ENCODE measurements at regions of chr20 and their contacts with region 1.

Region 1: GRCh38 chr20:33262658-33263065 is 20.4 kb upstream of the BPIFB1 start:
- DNase-seq: peak; percentile 82
- ATAC-seq: peak; percentile 99
- H3K4me3 ChIP-seq: no peak overlapping the region
- H3K27ac ChIP-seq: no peak overlapping the region
- H3K4me1 ChIP-seq: no peaks in the 10 kb centered on the region
- H3K27me3 ChIP-seq: peaks cover 0 to 15% of the 10 kb centered on the region in 2 experiments; a peak in 3 of 5 replicates
- CTCF ChIP-seq: peak; percentile 98
- EP300 ChIP-seq: no peak
- POLR2A ChIP-seq: no peak
- RAD21 ChIP-seq: peak; percentile 96

Region 2: GRCh38 chr20:33291830-33292355 is 29.2 kb after region 1 on chr20:
- CTCF ChIA-PET with region 1: interaction called, 42 read pairs
- POLR2A ChIA-PET with region 1: no interaction called
- in situ Hi-C with region 1: no loop called
- intact Hi-C with region 1: loop called (anchors 1 kb)
- DNase-seq: peak; percentile 59
- ATAC-seq: peak; percentile 74
- H3K4me3 ChIP-seq: no peak overlapping the region
- H3K27ac ChIP-seq: no peak overlapping the region
- H3K4me1 ChIP-seq: no peaks in the 10 kb centered on the region
- H3K27me3 ChIP-seq: peaks cover 6 to 50% of the 10 kb centered on the region in 2 experiments
- CTCF ChIP-seq: peak; percentile 100
- EP300 ChIP-seq: no peak
- POLR2A ChIP-seq: no peak
- RAD21 ChIP-seq: peak; percentile 89

Region 3: GRCh38 chr20:33299111-33299603 is 36.5 kb after region 1 on chr20:
- CTCF ChIA-PET with region 1: interaction called, 47 read pairs
- POLR2A ChIA-PET with region 1: no interaction called
- in situ Hi-C with region 1: loop called (anchors 5 kb)
- intact Hi-C with region 1: loop called (anchors 1 kb)
- DNase-seq: peak; percentile 63
- ATAC-seq: peak; percentile 91
- H3K4me3 ChIP-seq: no peak overlapping the region; a peak in 1 of 6 replicates
- H3K27ac ChIP-seq: no peak overlapping the region
- H3K4me1 ChIP-seq: 0 out of 2 replicates have a peak, but pooled peaks cover 7% of the 10 kb centered on the region
- H3K27me3 ChIP-seq: peaks cover 10 to 75% of the 10 kb centered on the region in 2 experiments; a peak in 4 of 5 replicates
- CTCF ChIP-seq: peak; percentile 99
- EP300 ChIP-seq: no peak
- POLR2A ChIP-seq: no peak
- RAD21 ChIP-seq: peak; percentile 94

Region 4: GRCh38 chr20:33345342-33345741 is 82.7 kb after region 1 on chr20:
- CTCF ChIA-PET with region 1: no interaction called
- POLR2A ChIA-PET with region 1: no interaction called
- in situ Hi-C with region 1: no loop called
- intact Hi-C with region 1: no loop called
- DNase-seq: no peak
- ATAC-seq: no peak
- H3K4me3 ChIP-seq: no peak overlapping the region
- H3K27ac ChIP-seq: no peak overlapping the region
- H3K4me1 ChIP-seq: peaks cover 48% of the 10 kb centered on the region
- H3K27me3 ChIP-seq: no peaks in the 10 kb centered on the region
- CTCF ChIP-seq: no peak
- EP300 ChIP-seq: no peak
- POLR2A ChIP-seq: no peak
- RAD21 ChIP-seq: no peak

Measured in HepG2 (cell line).